GM10248 (cell line): ENCODE measurements at regions of chr19 and their contacts with region 1.

Region 1: GRCh38 chr19:54448774-54449700 is at the start of gene LENG8:
- DNase-seq: peak; percentile 97
- CTCF ChIP-seq: no peak

Region 2: GRCh38 chr19:54463531-54464043 is 14.6 kb after region 1 on chr19 and contains the start of gene LENG9:
- CTCF ChIA-PET with region 1: interaction called, 11 read pairs
- POLR2A ChIA-PET with region 1: interaction called, 20 read pairs
- DNase-seq: peak; percentile 92
- CTCF ChIP-seq: no peak